WTC11 (cell line): ENCODE measurements at regions of chr6 and their contacts with region 1.

Region 1: GRCh38 chr6:93721385-93722048 is 302.2 kb upstream of the EPHA7 start:
- DNase-seq: peak; percentile 38
- ATAC-seq: peak; percentile 98
- H3K4me3 Mint-ChIP-seq: no peak overlapping the region
- H3K27ac Mint-ChIP-seq: no peak overlapping the region
- H3K4me1 Mint-ChIP-seq: peaks cover 19% of the 10 kb centered on the region
- H3K27me3 Mint-ChIP-seq: peaks cover 4% of the 10 kb centered on the region; the same call in 1 of the 2 replicates
- CTCF ChIP-seq: peak; percentile 61; the same call in 1 of the 2 replicates

Region 2: GRCh38 chr6:93699332-93699731 is 22.2 kb before region 1 on chr6:
- CTCF ChIA-PET with region 1: no interaction called
- POLR2A ChIA-PET with region 1: no interaction called
- DNase-seq: no peak
- ATAC-seq: no peak
- H3K4me3 Mint-ChIP-seq: no peak overlapping the region
- H3K27ac Mint-ChIP-seq: no peak overlapping the region
- H3K4me1 Mint-ChIP-seq: no peaks in the 10 kb centered on the region
- H3K27me3 Mint-ChIP-seq: no peaks in the 10 kb centered on the region
- CTCF ChIP-seq: no peak

Region 3: DNA sequence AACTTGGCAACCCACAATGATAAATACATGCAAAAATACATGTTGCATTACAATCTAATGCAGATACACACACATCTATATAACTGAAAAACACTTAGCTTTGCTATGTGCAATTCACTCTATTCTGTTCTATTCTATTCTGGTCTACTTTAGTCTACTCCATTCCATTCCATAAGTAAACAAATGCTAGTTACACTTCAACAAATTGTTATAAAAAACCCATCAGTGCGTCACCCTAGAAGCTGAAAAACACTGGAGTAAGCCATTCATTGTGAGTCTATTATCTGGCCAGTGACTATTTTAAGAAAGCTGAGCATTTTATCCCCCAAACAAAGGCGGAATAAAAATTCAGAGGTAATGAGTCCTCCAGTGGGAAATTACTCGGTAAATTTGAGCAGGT is 13.6 kb after region 1 on chr6:
- CTCF ChIA-PET with region 1: interaction called, 11 read pairs
- POLR2A ChIA-PET with region 1: no interaction called
- DNase-seq: no peak
- ATAC-seq: no peak
- H3K4me3 Mint-ChIP-seq: no peak overlapping the region
- H3K27ac Mint-ChIP-seq: no peak overlapping the region
- H3K4me1 Mint-ChIP-seq: peaks cover 27% of the 10 kb centered on the region
- H3K27me3 Mint-ChIP-seq: no peaks in the 10 kb centered on the region
- CTCF ChIP-seq: no peak